Activated T-helper 2 cell treated with anti-CD3 and anti-CD28 coated beads, Interferon-gamma antibody, Interleukin-2, Interleukin-4, amounts not matched to agents 10 μg/mL and 5 μg/mL and 100 μg/mL, durations not matched to agents 14 hours and 24 hours and 36 hours (primary cell): ENCODE measurements at regions of chr12 and their contacts with region 1.

Region 1: DNA sequence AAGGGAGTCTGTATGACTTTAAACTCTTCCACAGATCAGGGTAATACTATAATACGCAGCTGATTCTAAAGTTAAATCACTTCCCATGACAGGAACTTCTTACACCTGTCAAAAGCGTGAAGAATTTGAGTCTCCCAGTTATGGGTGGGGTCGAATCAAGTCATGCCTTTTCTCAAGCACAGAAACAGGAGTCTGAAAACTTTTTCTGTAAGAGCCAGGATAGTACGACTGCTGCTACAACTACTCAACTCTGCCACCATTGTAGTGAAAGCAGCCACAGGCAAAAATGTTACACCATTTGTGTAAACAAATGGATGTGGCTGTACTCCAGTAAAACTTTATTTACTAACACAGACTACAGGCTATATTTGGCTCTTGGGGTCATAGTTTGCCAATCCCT is 90.3 kb downstream of the DUSP6 start:
- DNase-seq: no peak
- H3K4me3 Mint-ChIP-seq: no peak overlapping the region
- H3K27ac Mint-ChIP-seq: peak overlapping the region; percentile 28
- H3K4me1 Mint-ChIP-seq: peaks cover 52% of the 10 kb centered on the region
- H3K27me3 Mint-ChIP-seq: no peaks in the 10 kb centered on the region

Region 2: DNA sequence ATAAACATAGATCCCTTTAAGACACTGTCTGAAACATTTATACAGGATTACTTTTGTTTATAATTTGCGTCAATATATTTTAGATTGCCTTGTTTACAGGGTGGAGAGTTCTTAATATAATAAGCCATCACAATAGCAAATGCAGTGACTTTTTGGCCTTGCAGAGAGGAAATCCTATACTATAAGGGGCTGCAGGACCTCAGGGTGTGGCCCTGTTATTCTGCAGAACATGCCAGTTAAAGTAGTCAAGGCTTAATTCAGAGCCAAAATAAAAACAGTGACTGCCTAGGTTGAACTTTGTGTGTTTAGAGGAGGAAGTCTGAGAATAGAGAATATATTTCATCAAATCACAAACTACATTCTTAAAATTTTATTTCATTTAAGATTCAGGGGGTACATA is 291.2 kb before region 1 on chr12:
- intact Hi-C with region 1: no loop called
- DNase-seq: no peak
- H3K4me3 Mint-ChIP-seq: no peak overlapping the region
- H3K27ac Mint-ChIP-seq: no peak overlapping the region
- H3K4me1 Mint-ChIP-seq: no peaks in the 10 kb centered on the region
- H3K27me3 Mint-ChIP-seq: peaks cover 12% of the 10 kb centered on the region

Region 3: GRCh38 chr12:89273525-89273924 is 11.5 kb after region 1 on chr12:
- intact Hi-C with region 1: loop called (anchors 2 kb)
- DNase-seq: no peak
- H3K4me3 Mint-ChIP-seq: no peak overlapping the region
- H3K27ac Mint-ChIP-seq: no peak overlapping the region
- H3K4me1 Mint-ChIP-seq: peaks cover 15% of the 10 kb centered on the region
- H3K27me3 Mint-ChIP-seq: no peaks in the 10 kb centered on the region